ENCODE measurements at regions of chr1 and their contacts with region 1.

Region 1: DNA sequence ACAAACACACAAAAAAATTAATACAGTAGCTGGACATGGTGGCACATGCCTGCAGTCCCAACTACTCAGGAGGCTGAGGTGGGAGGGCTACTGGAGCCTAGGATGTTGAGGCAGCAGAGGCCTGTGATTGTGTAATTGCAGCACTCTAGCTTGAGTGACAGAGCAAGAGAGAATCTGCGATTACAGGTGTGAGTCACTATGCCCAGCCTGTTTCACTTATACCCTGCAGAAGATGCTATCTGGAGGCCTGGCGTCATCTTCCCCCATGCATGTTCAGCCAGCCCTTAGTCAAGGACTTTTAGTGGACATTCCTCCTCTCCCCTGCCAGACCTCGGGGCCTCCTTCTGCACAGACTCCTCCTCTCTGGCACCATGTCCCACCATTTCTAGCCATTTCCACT is 36.3 kb upstream of the RCC2 start:
- DNase-seq: no peak
- H3K4me3 ChIP-seq: no peak overlapping the region
- H3K4me3 Mint-ChIP-seq: no peak overlapping the region
- H3K27ac Mint-ChIP-seq: no peak overlapping the region
- H3K4me1 ChIP-seq: peaks cover 7% of the 10 kb centered on the region
- H3K4me1 Mint-ChIP-seq: peaks cover 7% of the 10 kb centered on the region
- H3K27me3 ChIP-seq: no peaks in the 10 kb centered on the region
- H3K27me3 Mint-ChIP-seq: no peaks in the 10 kb centered on the region
- CTCF ChIP-seq: no peak

Region 2: DNA sequence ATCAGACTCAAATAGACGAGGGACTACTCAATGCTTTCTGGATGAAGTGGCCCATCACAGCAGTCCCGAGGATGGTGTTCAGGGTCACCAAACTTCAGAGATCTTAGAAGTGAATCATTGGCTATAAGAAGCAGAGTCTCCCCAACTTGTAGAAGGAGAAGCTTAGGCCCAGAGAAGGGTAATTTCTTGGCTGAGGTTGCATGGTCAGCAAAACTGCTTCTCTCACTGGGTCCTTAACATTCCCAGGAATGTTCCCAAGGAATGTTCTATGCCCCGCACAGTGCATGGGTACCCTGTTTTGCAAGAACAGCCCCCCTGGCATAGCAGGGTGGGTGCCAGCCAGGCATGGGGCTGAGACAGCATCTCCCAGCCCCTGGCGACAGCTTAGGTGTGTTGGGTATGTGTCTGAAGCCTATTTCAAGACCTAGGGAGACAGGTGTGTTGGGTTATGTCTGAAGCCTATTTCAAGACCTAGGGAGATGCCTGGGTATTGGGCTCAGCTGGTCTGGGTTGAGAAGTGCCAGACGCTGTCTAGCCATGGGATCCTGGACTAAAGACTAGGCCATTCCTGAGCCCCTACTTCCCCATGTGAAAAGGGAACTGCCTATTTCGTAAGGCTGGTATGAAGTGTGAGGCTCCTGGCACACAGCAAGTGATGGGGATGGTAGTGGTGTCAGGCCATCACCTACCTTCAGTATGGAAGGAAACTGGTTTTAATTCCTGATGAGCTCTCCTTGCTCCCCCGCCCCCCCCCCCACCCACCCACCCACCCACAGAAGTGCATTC is 77.6 kb before region 1 on chr1:
- CTCF ChIA-PET with region 1: no interaction called
- POLR2A ChIA-PET with region 1: no interaction called
- intact Hi-C with region 1: no loop called
- DNase-seq: no peak
- H3K4me3 ChIP-seq: no peak overlapping the region
- H3K4me3 Mint-ChIP-seq: no peak overlapping the region
- H3K27ac Mint-ChIP-seq: no peak overlapping the region
- H3K4me1 ChIP-seq: no peaks in the 10 kb centered on the region
- H3K4me1 Mint-ChIP-seq: no peaks in the 10 kb centered on the region
- H3K27me3 ChIP-seq: no peaks in the 10 kb centered on the region
- H3K27me3 Mint-ChIP-seq: peaks cover 3% of the 10 kb centered on the region
- CTCF ChIP-seq: no peak

Region 3: GRCh38 chr1:17439250-17440073 is 36.3 kb before region 1 on chr1 and contains the start of gene RCC2:
- CTCF ChIA-PET with region 1: interaction called, 4 read pairs
- POLR2A ChIA-PET with region 1: no interaction called
- intact Hi-C with region 1: loop called (anchors 5 kb)
- DNase-seq: peak; percentile 61 to 63
- H3K4me3 ChIP-seq: peak within 1 kb of the TSS; percentile 78
- H3K4me3 Mint-ChIP-seq: peak within 1 kb of the TSS; percentile 85
- H3K27ac Mint-ChIP-seq: peak within 1 kb of the TSS; percentile 93
- H3K4me1 ChIP-seq: peaks cover 21% of the 10 kb centered on the region
- H3K4me1 Mint-ChIP-seq: peaks cover 16% of the 10 kb centered on the region
- H3K27me3 ChIP-seq: no peaks in the 10 kb centered on the region
- H3K27me3 Mint-ChIP-seq: no peaks in the 10 kb centered on the region
- CTCF ChIP-seq: no peak
- total RNA-seq, gene RCC2: 101 and 103 TPM in 2 replicates